Activated CD4-positive, alpha-beta T cell treated with anti-CD3 and anti-CD28 coated beads, Interleukin-2, amount 10 ng/mL, durations not matched to agents 24 days and 14 days (primary cell): ENCODE measurements at regions of chr9 and their contacts with region 1.

Region 1: DNA sequence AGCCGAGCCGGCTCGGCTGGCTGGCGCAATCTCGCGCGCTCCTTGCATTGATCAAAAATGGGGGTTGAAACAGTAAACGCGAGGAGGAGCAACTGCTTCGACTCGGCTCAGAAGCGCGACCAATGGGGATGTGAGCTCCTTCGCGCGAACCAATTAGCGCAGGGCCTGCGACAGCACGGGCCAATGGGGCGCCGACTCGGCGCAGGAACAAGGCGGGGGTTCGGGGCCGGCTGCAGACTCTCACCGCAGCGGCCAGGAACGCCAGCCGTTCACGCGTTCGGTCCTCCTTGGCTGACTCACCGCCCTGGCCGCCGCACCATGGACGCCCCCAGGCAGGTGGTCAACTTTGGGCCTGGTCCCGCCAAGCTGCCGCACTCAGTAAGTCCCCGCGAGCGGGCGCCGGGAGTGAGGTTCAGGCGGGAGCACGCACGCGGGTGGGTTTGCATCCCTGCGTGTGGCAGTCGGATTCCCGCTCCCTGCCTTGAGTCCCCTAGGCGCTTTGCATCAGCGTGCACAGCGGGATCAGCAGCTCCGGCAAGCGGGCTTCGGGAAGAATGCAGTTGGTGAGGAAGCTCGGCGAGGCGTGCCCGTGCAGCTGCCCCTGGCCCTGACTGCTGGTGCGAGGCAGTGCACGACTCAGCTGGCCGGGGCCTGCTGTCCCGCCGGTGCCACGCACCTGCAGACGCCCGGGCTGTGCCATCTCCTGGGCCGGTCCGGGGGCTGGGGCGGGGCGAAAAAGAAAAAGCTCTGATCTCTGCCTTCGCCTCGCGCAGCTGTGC is at the start of gene PSAT1:
- DNase-seq: peak; percentile 98
- H3K4me3 Mint-ChIP-seq: peak within 1 kb of the TSS; percentile 96
- H3K27ac Mint-ChIP-seq: peak within 1 kb of the TSS; percentile 97
- H3K4me1 Mint-ChIP-seq: peaks cover 36% of the 10 kb centered on the region
- H3K27me3 Mint-ChIP-seq: no peaks in the 10 kb centered on the region
- total RNA-seq, gene PSAT1: 88.5 and 91.3 TPM in 2 replicates

Region 2: GRCh38 chr9:77177161-77177893 is 1119.8 kb before region 1 on chr9 and contains the start of gene VPS13A:
- intact Hi-C with region 1: loop called (anchors 5 kb)
- DNase-seq: peak; percentile 97
- H3K4me3 Mint-ChIP-seq: peak within 1 kb of the TSS; percentile 99
- H3K27ac Mint-ChIP-seq: peak within 1 kb of the TSS; percentile 92
- H3K4me1 Mint-ChIP-seq: peaks cover 22% of the 10 kb centered on the region
- H3K27me3 Mint-ChIP-seq: peaks cover 15% of the 10 kb centered on the region
- total RNA-seq, gene VPS13A: 44.9 and 47.7 TPM in 2 replicates

Region 3: GRCh38 chr9:78261403-78262001 is 35.6 kb before region 1 on chr9:
- intact Hi-C with region 1: loop called (anchors 2 kb)
- DNase-seq: no peak
- H3K4me3 Mint-ChIP-seq: no peak overlapping the region
- H3K27ac Mint-ChIP-seq: no peak overlapping the region
- H3K4me1 Mint-ChIP-seq: no peaks in the 10 kb centered on the region
- H3K27me3 Mint-ChIP-seq: no peaks in the 10 kb centered on the region